GM10248 (cell line): ENCODE measurements at regions of chr11 and their contacts with region 1.

Region 1: DNA sequence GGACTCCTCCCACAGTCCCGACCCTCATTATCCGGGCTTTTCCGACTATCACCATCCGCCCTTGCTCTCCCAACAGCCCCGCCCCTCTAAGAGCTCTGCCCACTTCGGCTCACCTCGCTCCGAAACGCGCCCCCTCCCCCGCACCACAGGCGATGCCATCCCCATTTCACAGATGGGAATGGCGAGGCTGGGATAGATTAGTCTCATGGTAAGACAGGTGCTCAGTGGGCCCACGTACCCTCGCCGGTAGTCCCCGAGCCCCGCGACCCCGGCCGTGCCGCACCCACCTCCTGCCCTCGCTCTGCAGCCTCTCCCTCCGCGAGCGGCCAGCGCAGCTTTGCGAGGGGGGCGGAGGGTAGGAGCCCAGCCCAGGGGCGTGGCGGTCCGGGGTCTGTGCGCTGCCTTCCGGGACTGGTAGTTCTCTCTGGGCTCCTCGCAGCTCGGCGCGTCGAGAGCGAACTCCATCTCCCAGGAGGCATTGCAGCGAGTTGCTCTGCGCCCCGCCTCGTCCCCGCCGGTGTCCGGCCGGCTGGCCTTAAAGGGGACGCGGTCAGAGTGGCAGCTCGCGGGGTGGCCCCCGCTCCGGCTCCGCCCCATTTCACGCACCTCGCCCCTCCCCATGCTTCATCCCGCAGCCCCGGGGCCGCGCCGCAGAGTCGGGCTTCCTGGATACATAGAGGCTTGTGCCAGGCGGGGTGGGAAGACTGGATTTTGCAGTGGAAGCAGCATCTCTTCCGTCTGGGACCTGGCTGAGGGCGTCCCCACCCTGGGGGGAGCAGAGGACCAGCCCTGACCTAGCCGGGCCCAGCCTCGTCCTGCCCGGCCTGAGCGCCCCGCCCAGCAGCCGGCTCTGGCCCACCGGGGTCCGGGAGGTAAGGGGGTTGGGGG is at the starts of genes KCTD21 and USP35:
- DNase-seq: peak; percentile 98
- CTCF ChIP-seq: no peak

Region 2: GRCh38 chr11:77479746-77480352 is 708.7 kb before region 1 on chr11:
- CTCF ChIA-PET with region 1: no interaction called
- POLR2A ChIA-PET with region 1: interaction called, 10 read pairs
- DNase-seq: no peak
- CTCF ChIP-seq: no peak

Region 3: GRCh38 chr11:78112582-78113275 is 75.8 kb before region 1 on chr11:
- CTCF ChIA-PET with region 1: no interaction called
- POLR2A ChIA-PET with region 1: no interaction called
- DNase-seq: peak; percentile 31
- CTCF ChIP-seq: no peak